ENCODE measurements at regions of chr6 and their contacts with region 1.

Region 1: DNA sequence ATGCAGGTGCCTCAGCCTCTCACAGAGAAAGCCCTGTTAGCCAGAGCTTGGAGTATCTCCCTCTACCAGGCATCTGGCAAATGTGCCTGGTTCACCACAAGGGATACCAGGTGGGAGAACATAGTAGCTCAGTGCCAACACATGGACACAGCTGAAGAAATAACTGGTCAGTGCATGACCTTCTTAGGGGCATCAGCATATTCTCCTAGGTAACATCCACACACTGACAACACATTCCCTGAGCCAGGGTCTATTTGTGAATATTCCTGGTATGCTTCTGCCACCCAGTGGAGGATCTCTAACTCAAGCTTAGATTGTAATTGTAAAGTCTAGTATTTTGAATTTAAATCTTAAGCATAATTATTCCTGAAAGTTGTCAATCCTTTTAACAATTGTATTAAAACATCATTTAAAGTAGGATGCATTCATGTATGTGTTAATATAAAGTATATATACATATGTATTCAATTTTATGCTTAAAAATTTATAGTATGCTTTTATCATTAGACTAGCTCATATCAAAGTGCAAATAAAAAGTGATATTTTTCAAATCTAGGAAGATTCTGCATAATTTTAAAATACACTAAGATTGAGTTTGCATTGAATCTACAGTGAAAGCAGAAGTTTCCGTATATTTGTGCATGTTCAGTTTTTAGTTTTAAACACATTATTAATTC is 45.3 kb upstream of the COL21A1 start:
- DNase-seq: peak; percentile 49
- H3K4me3 ChIP-seq: no peak overlapping the region
- H3K27ac ChIP-seq: no peak overlapping the region
- H3K4me1 ChIP-seq: no peaks in the 10 kb centered on the region; a peak in 1 of 4 replicates
- H3K27me3 ChIP-seq: peaks cover 9% of the 10 kb centered on the region
- CTCF ChIP-seq: peak; percentile 77
- EP300 ChIP-seq: no peak
- RAD21 ChIP-seq: peak; percentile 92

Region 2: DNA sequence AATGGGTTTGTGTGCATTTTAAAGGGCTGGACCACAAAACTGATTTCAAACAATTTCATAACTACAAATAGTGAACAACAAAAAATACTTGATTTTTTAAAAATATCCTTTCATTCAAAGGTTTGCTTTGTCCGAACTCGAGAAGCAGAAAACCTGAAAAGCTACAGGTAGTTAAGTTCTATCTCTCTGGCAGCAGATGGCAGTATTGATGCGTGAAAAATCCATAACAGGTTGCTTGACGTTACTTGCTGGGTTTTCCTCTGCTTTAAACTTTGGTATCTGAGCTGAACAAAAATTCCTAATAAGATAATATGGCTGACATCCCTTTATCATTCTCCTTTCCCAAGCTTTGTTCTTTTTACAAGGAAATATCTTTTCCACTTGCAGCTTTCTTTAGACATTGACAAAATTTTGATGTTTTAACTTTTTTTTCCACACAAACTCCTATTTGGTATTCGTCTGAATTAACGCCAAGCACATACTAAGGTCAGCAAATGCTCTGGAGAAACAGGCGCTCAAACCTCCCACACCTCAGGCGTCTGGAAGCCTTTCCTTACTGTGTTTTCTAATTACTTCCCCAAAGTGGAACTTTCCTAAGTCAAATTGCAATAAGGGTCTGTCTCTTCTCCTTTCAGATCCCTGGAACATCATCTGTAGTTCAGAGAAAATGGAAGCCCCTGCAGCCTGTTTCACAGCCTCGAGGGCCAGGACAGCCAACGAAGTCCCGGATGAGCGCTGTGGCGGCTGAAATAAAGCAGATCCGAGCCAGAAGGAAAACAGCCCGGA is 1015.7 kb before region 1 on chr6:
- CTCF ChIA-PET with region 1: interaction called, 55 read pairs
- POLR2A ChIA-PET with region 1: no interaction called
- DNase-seq: peak; percentile 19
- H3K4me3 ChIP-seq: no peak overlapping the region; a peak in 1 of 4 replicates
- H3K27ac ChIP-seq: peak overlapping the region in 1 of 2 experiments; percentile 22; a peak in 1 of 4 replicates
- H3K4me1 ChIP-seq: peaks cover 0 to 4% of the 10 kb centered on the region in 2 experiments; a peak in 1 of 4 replicates
- H3K27me3 ChIP-seq: no peaks in the 10 kb centered on the region; the same call in 1 of the 2 replicates
- CTCF ChIP-seq: peak; percentile 72
- EP300 ChIP-seq: no peak
- RAD21 ChIP-seq: peak; percentile 82

Region 3: GRCh38 chr6:55445648-55446204 is 846.9 kb before region 1 on chr6:
- CTCF ChIA-PET with region 1: interaction called, 35 read pairs
- POLR2A ChIA-PET with region 1: no interaction called
- DNase-seq: peak; percentile 16
- H3K4me3 ChIP-seq: no peak overlapping the region
- H3K27ac ChIP-seq: no peak overlapping the region
- H3K4me1 ChIP-seq: no peaks in the 10 kb centered on the region
- H3K27me3 ChIP-seq: peaks cover 6% of the 10 kb centered on the region
- CTCF ChIP-seq: peak; percentile 78
- EP300 ChIP-seq: no peak
- RAD21 ChIP-seq: peak; percentile 83

Region 4: DNA sequence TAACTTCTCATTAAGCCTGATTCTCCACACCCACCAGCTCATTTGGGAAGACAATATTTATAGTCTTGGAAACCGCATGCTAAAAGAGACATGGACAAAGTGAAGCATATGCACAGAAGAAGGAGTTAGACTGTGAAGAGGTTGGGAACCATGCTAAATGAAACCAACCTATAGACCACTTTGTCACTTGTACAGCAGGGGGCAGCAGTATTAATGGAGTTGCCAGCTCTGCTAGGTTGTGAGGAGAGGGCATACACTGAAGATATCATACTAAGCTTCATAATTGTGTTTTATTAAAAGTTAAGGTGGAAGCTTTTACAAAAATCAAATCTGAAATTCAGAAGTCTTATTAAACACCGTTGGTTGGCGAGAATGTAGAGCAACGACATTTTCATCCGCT is 675.4 kb before region 1 on chr6:
- CTCF ChIA-PET with region 1: interaction called, 10 read pairs
- POLR2A ChIA-PET with region 1: no interaction called
- DNase-seq: peak; percentile 16
- H3K4me3 ChIP-seq: no peak overlapping the region; a peak in 1 of 4 replicates
- H3K27ac ChIP-seq: no peak overlapping the region
- H3K4me1 ChIP-seq: no peaks in the 10 kb centered on the region
- H3K27me3 ChIP-seq: no peaks in the 10 kb centered on the region
- CTCF ChIP-seq: peak; percentile 71
- EP300 ChIP-seq: no peak
- RAD21 ChIP-seq: peak; percentile 65

Region 5: DNA sequence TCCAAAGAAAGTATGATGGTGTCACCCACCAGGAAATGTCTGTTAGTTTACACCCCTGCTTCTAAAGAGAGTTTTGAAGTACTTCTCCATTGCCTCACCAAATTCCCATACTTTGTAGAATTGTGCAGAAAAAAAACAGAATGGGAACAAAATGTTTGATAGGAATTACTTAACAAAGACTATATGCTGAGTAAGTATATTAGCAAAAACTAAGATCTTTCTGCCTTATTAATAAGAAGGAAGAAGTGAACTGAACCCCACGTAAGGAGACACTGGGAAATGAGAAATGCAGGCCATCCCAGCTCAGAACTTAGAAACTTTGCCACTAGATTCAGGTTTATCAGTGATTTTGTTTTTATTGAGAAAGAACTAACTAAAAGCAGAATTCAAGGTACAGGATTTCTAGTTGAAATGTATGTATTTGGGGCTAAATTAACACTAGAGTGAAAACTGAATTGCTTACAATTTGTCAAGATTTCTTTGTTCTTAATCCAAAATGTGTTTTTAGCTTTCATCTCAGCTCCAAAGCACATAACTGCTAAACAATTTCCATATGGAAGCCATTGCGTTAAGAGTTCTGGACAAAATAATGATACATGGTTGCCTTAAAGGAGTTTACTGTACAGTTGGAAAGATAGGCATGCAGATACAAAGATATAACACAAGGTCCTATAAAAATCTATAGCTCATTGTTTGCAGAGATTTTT is 314.5 kb before region 1 on chr6:
- CTCF ChIA-PET with region 1: interaction called, 22 read pairs
- POLR2A ChIA-PET with region 1: no interaction called
- DNase-seq: no peak
- H3K4me3 ChIP-seq: no peak overlapping the region
- H3K27ac ChIP-seq: no peak overlapping the region
- H3K4me1 ChIP-seq: no peaks in the 10 kb centered on the region; a peak in 2 of 4 replicates
- H3K27me3 ChIP-seq: no peaks in the 10 kb centered on the region
- CTCF ChIP-seq: no peak
- EP300 ChIP-seq: no peak
- RAD21 ChIP-seq: no peak

Region 6: GRCh38 chr6:56314683-56315523 is 22.3 kb after region 1 on chr6:
- CTCF ChIA-PET with region 1: interaction called, 25 read pairs
- POLR2A ChIA-PET with region 1: no interaction called
- DNase-seq: peak; percentile 26
- H3K4me3 ChIP-seq: no peak overlapping the region; a peak in 1 of 4 replicates
- H3K27ac ChIP-seq: no peak overlapping the region
- H3K4me1 ChIP-seq: no peaks in the 10 kb centered on the region
- H3K27me3 ChIP-seq: no peaks in the 10 kb centered on the region
- CTCF ChIP-seq: peak; percentile 94
- EP300 ChIP-seq: no peak
- RAD21 ChIP-seq: peak; percentile 90

Measured in SK-N-SH (cell line).